Activated CD4-positive, alpha-beta memory T cell treated with anti-CD3 and anti-CD28 coated beads for 36 hours (primary cell): ENCODE measurements at regions of chr9 and their contacts with region 1.

Region 1: DNA sequence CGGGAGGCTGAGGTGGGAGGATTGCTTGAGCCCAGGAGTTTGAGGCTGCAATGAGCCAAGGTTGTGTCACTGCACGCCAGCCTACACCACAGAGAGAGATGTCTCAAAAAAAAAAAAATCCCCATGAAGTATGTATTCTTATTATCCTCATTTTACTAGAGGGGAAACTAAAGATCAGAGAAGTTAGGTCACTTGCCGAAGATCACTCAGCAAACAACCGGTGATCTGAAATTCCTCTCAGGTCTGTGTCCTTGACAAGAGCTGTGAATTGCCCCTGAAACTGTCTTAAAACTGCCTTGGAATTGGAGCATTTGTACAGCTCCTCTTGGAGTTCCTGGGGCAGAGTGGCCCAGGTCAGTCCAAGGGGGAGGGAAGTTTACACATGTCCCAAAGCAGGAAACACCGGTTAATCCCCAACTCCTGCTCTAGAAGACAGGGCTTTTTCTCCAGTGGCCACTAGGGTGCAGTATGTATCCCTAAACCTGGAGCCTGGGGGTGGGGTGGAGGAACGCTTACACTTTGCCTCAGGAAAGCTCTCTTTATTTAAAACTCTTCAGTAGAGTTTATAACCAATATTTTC is 27.6 kb downstream of the AQP7 start:
- DNase-seq: peak; percentile 79
- H3K4me3 Mint-ChIP-seq: no peak overlapping the region
- H3K27ac Mint-ChIP-seq: no peak overlapping the region
- H3K4me1 Mint-ChIP-seq: peaks cover 4% of the 10 kb centered on the region
- H3K27me3 Mint-ChIP-seq: no peaks in the 10 kb centered on the region

Region 2: DNA sequence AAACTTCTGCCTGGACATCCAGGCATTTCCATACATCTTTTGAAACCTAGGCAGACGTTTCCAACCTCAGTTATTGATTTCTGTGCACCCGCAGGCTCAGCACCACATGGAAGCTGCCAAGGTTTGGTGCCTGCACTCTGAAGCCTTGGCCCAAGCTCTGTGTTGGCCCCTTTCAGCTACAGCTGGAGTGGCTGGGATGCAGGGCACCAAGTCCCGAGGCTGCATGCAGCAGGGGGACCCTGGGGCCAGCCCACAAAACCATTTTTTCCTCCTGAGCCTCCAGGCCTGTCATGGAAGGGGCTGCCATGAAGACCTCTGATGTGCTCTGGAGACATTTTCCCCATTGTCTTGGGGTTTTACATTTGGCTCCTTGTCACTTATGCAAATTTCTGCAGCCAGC is 34.5 kb before region 1 on chr9:
- CTCF ChIA-PET with region 1: no interaction called
- POLR2A ChIA-PET with region 1: no interaction called
- intact Hi-C with region 1: no loop called
- DNase-seq: no peak
- H3K4me3 Mint-ChIP-seq: no peak overlapping the region
- H3K27ac Mint-ChIP-seq: no peak overlapping the region
- H3K4me1 Mint-ChIP-seq: peaks cover 7% of the 10 kb centered on the region
- H3K27me3 Mint-ChIP-seq: no peaks in the 10 kb centered on the region

Region 3: GRCh38 chr9:33350310-33350709 is 24.4 kb before region 1 on chr9:
- CTCF ChIA-PET with region 1: interaction called, 15 read pairs
- POLR2A ChIA-PET with region 1: no interaction called
- intact Hi-C with region 1: no loop called
- DNase-seq: no peak
- H3K4me3 Mint-ChIP-seq: no peak overlapping the region
- H3K27ac Mint-ChIP-seq: peak overlapping the region; percentile 46
- H3K4me1 Mint-ChIP-seq: no peaks in the 10 kb centered on the region
- H3K27me3 Mint-ChIP-seq: no peaks in the 10 kb centered on the region

Region 4: GRCh38 chr9:33404788-33405362 is 30.2 kb after region 1 on chr9:
- CTCF ChIA-PET with region 1: interaction called, 18 read pairs
- POLR2A ChIA-PET with region 1: no interaction called
- intact Hi-C with region 1: no loop called
- DNase-seq: no peak
- H3K4me3 Mint-ChIP-seq: no peak overlapping the region
- H3K27ac Mint-ChIP-seq: no peak overlapping the region
- H3K4me1 Mint-ChIP-seq: peaks cover 7% of the 10 kb centered on the region
- H3K27me3 Mint-ChIP-seq: no peaks in the 10 kb centered on the region

Region 5: DNA sequence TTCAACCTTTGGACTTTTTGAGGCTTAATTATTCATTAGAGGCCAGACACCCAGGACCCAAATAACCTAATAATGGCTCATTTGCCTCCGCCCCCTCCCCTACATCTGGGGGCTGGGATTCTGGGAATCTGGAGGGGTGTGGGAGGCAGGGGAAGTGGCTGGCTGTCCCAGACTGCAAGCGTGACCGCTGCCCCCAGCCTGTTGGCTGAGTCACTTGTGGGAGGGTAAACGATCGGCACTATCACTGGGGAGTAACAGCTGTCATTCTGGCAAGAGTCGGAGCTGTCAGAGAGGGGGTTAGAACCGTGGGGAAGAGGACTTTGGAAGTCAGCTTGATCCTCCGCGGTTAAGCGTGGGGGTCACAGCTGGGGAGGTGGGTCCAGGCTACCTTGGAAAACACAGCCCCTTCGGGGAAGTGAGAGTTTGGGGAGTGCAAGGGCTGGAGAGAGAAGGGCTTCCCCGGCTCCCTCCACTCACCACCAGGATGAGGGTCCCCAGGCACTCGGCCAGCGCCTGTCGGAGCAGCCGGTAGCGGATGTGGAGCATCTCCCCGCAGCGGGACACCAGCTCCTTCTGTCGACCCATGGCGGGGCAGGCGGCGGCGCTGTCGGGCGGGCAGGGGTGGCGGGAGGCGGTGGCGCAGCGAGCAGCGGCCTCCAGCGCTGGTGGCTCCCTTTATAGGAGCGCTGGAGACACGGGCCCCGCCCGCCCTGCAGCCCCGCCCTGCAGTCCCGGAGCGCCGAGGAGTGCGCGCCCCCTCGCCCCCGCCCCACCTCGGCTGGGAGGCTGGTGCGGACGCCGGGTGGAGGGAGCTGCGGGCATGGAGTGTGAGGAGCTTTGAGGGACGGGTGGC is 72.4 kb after region 1 on chr9 and contains the start of gene AQP3:
- CTCF ChIA-PET with region 1: interaction called, 36 read pairs
- POLR2A ChIA-PET with region 1: no interaction called
- intact Hi-C with region 1: loop called (anchors 2 kb)
- DNase-seq: peak; percentile 84
- H3K4me3 Mint-ChIP-seq: peak within 1 kb of the TSS; percentile 89
- H3K27ac Mint-ChIP-seq: peak within 1 kb of the TSS; percentile 94
- H3K4me1 Mint-ChIP-seq: peaks cover 50% of the 10 kb centered on the region
- H3K27me3 Mint-ChIP-seq: no peaks in the 10 kb centered on the region
- total RNA-seq, gene AQP3: 19.4 to 20.2 TPM

Region 6: DNA sequence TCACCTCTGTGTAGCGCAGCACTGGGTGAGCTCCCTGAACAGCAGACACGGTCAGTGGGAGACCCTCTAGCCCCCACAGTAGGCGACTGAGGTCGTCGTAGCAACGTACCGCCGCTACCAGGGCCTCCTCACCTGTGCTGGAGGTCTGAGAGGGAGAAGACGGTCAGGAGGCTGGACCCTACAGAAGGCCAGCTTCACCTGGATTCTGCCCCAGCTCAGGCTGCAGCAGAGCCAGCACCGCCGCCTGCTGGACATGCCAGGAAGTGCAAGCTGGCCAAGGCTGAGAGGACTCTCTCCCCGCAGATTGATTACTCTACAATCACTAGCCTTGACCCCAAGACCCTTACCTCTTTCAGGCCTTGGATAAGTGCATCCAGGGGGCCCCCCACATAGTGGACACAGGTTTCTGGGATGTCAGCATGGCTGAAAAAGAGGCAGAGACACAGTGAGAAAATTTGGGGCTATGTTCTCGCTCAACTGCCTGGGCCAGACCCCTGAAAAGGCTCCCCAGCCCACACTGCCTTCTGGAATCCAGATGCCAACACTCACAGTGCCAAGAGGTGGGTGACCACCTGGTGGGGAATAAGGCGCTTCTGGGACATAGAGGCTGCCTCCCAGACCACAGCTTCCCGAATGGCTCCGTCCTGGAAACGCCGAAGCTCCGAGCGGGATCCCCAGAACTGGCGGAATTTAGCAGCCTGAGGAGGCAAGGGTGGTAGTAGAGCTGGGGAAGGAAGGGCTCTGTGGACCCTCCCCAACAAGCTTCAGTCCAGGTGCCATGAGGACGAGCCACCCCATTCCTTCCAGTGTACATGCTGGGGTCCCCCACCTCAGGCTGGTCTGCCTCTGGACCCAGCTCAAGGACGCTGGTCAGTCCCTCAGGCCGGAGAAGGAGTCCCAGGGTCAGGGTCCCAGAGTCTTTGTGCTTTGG is 92.1 kb after region 1 on chr9:
- CTCF ChIA-PET with region 1: interaction called, 84 read pairs
- POLR2A ChIA-PET with region 1: interaction called, 4 read pairs
- intact Hi-C with region 1: loop called (anchors 1 kb)
- DNase-seq: peak; percentile 80
- H3K4me3 Mint-ChIP-seq: no peak overlapping the region
- H3K27ac Mint-ChIP-seq: no peak overlapping the region
- H3K4me1 Mint-ChIP-seq: peaks cover 5% of the 10 kb centered on the region
- H3K27me3 Mint-ChIP-seq: no peaks in the 10 kb centered on the region

Region 7: GRCh38 chr9:33721674-33722358 is 347.1 kb after region 1 on chr9:
- CTCF ChIA-PET with region 1: interaction called, 8 read pairs
- POLR2A ChIA-PET with region 1: no interaction called
- intact Hi-C with region 1: loop called (anchors 10 kb)
- DNase-seq: peak; percentile 91
- H3K4me3 Mint-ChIP-seq: no peak overlapping the region
- H3K27ac Mint-ChIP-seq: no peak overlapping the region
- H3K4me1 Mint-ChIP-seq: peaks cover 3% of the 10 kb centered on the region
- H3K27me3 Mint-ChIP-seq: peaks cover 6% of the 10 kb centered on the region